ENCODE measurements at regions of chr15 and their contacts with region 1.

Region 1: DNA sequence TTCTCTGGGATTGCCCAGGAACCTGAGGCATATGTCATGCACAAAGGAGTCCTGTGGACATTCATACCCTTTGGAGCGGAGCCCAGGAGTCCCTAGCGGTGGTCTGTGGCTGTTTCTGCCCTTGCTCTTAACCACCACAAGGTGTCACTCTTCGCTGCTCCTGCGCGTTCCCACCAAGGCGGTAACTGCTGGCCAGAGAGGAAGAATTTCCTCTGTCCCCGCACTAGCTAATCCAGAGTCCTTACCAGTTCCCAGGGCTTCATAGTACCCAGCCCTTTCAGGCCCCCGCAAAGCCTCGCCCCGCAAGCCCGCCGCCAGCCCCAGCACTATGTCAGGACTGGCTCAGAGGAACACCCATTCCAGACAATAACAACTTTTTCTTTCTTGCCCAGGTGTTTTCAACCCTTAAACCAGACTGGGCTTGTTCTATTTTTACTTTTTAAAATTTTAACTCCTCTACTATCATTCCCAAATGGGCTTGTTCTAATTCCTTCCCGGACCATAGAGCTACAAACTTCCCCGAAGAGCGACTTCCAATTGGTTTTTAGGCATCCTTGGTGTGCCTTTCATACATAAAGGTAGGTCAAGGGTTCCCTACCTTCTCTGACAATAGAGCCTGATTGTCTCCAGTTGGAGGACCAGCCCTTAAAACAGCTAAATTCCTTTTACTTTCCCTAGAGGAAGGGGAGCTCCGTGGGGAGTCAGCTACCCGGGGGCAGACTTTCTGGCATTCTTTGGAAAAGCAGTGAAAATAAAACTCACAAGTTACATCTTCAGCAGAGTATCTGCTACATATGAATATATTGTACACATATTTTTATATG is 31.8 kb upstream of the ZNF774 start:
- DNase-seq: peak; percentile 77
- ATAC-seq: peak; percentile 99
- H3K4me3 Mint-ChIP-seq: no peak overlapping the region
- H3K27ac Mint-ChIP-seq: no peak overlapping the region
- H3K4me1 Mint-ChIP-seq: peaks cover 2% of the 10 kb centered on the region
- H3K27me3 Mint-ChIP-seq: no peaks in the 10 kb centered on the region
- CTCF ChIP-seq: peak; percentile 97

Region 2: GRCh38 chr15:90291679-90292356 is 28.5 kb before region 1 on chr15:
- CTCF ChIA-PET with region 1: interaction called, 22 read pairs
- POLR2A ChIA-PET with region 1: no interaction called
- intact Hi-C with region 1: no loop called
- DNase-seq: peak; percentile 52
- ATAC-seq: no peak
- H3K4me3 Mint-ChIP-seq: no peak overlapping the region
- H3K27ac Mint-ChIP-seq: no peak overlapping the region
- H3K4me1 Mint-ChIP-seq: peaks cover 3% of the 10 kb centered on the region
- H3K27me3 Mint-ChIP-seq: peaks cover 4% of the 10 kb centered on the region
- CTCF ChIP-seq: no peak

Region 3: GRCh38 chr15:90362936-90363212 is 42.6 kb after region 1 on chr15:
- CTCF ChIA-PET with region 1: interaction called, 49 read pairs
- POLR2A ChIA-PET with region 1: no interaction called
- intact Hi-C with region 1: no loop called
- DNase-seq: no peak
- ATAC-seq: no peak
- H3K4me3 Mint-ChIP-seq: no peak overlapping the region
- H3K27ac Mint-ChIP-seq: no peak overlapping the region
- H3K4me1 Mint-ChIP-seq: peaks cover 25% of the 10 kb centered on the region
- H3K27me3 Mint-ChIP-seq: no peaks in the 10 kb centered on the region
- CTCF ChIP-seq: no peak

Region 4: DNA sequence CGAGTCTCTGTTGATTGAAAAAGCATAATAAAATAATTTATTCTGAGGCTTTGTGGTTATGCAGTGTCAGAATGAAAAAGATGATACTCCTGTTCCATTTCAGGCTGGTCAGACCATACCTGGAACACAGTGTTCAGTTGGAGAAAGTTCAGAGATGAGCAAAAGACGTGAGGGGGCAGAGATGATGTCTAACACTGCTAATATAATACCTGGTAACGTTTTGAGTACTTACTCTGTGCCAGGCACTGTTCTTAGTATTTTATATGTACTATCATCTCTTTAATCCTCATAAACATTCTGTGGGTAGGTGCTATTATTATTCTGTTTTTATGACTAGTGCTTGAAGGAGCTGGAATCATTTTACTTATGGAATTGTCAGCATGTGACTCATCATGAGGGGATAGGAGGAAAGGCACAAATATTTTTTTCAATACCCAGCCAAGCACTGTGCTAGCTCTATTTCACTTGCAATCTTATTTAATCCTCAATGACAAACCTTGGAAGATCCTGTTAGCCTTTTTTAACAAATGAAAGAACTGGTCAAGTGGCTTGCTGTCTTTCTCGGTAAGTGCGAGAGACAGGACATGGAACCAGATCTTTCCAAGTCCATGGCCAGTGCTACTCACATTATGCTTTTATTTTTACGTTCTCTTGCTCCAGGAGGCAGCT is 99.6 kb after region 1 on chr15:
- CTCF ChIA-PET with region 1: interaction called, 23 read pairs
- POLR2A ChIA-PET with region 1: no interaction called
- intact Hi-C with region 1: no loop called
- DNase-seq: peak; percentile 75
- ATAC-seq: peak; percentile 96
- H3K4me3 Mint-ChIP-seq: peak overlapping the region; percentile 50
- H3K27ac Mint-ChIP-seq: peak overlapping the region; percentile 95
- H3K4me1 Mint-ChIP-seq: peaks cover 74% of the 10 kb centered on the region
- H3K27me3 Mint-ChIP-seq: no peaks in the 10 kb centered on the region
- CTCF ChIP-seq: no peak

Region 5: DNA sequence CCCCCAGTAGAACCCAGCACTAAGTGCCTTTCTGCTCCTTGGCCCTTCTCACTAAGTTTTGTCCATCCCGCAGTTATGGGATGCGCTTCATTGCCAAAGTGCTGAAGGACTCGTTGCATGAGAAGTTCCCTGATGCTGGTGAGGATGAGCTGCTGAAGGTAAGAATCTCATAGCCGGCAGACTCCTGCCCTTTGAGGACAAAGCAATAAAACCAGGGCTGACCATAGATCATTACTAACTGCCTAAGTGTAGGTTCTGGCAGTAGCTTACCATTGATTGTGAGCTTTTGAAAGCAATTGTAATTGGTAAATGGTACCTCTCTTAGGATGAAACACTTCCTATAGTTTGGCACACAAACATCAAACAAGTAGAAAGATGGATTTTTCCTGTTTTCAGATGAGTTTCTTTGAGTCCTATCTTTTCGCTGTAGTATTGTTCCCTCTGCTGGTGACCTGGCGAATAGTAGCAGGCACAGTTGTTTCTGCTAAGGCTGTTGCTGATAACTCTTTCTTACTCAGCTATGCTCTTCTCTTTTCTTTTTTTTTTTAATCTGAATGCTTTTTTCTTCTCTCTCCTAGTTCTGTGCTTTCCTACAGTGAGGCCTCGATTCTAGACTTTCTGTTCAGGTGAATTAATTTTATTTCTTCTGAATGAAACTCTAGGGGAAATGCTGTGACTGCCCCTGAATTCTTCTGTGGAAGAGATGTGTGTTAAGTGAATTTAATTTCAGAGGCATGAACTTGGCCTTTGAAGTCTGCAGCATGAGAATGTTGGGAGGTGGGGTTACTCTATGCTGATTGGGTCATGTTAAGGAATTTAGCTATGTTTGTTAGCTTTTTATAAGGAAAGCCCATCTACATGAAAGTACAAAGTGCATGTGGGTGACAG is 162.1 kb after region 1 on chr15:
- CTCF ChIA-PET with region 1: interaction called, 86 read pairs
- POLR2A ChIA-PET with region 1: interaction called, 3 read pairs
- intact Hi-C with region 1: loop called (anchors 1 kb)
- DNase-seq: peak; percentile 62
- ATAC-seq: peak; percentile 74
- H3K4me3 Mint-ChIP-seq: no peak overlapping the region
- H3K27ac Mint-ChIP-seq: no peak overlapping the region
- H3K4me1 Mint-ChIP-seq: peaks cover 25% of the 10 kb centered on the region
- H3K27me3 Mint-ChIP-seq: no peaks in the 10 kb centered on the region
- CTCF ChIP-seq: peak; percentile 74

Region 6: DNA sequence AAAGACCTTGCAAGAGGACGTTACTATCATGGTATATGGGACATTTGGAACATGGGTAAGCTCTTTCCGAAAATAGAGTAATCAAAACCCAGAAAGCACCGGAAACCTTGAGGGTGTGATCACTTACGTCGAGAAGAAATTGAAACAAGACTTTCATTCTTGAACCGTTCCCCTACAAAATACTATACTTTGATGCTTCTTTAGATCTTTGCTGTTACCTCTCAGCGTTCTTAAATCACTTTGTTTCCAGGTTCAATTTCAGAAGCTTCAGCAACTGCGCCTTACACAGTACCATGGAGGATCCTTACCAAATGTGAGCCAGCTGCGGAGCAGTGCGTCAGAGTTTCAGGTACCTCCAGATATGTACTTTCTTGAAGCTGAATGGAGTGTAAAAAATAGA is 219.5 kb after region 1 on chr15:
- CTCF ChIA-PET with region 1: interaction called, 11 read pairs
- POLR2A ChIA-PET with region 1: no interaction called
- intact Hi-C with region 1: no loop called
- DNase-seq: peak; percentile 43
- ATAC-seq: peak; percentile 80
- H3K4me3 Mint-ChIP-seq: peak overlapping the region; percentile 77
- H3K27ac Mint-ChIP-seq: peak overlapping the region; percentile 94
- H3K4me1 Mint-ChIP-seq: peaks cover 63% of the 10 kb centered on the region
- H3K27me3 Mint-ChIP-seq: no peaks in the 10 kb centered on the region
- CTCF ChIP-seq: no peak